Dendritic cell treated with granulocyte-macrophage colony-stimulating factor and Interleukin-4, amounts not matched to agents 40 ng/mL and 50 ng/mL, for 4 days (primary cell): ENCODE measurements at regions of chr1 and their contacts with region 1.

Region 1: GRCh38 chr1:52365746-52366516 is at the start of gene CC2D1B:
- H3K4me3 Mint-ChIP-seq: peak within 1 kb of the TSS; percentile 96
- H3K27ac Mint-ChIP-seq: peak within 1 kb of the TSS; percentile 99
- H3K4me1 Mint-ChIP-seq: peaks cover 31% of the 10 kb centered on the region
- H3K27me3 Mint-ChIP-seq: peaks cover 19% of the 10 kb centered on the region

Region 2: DNA sequence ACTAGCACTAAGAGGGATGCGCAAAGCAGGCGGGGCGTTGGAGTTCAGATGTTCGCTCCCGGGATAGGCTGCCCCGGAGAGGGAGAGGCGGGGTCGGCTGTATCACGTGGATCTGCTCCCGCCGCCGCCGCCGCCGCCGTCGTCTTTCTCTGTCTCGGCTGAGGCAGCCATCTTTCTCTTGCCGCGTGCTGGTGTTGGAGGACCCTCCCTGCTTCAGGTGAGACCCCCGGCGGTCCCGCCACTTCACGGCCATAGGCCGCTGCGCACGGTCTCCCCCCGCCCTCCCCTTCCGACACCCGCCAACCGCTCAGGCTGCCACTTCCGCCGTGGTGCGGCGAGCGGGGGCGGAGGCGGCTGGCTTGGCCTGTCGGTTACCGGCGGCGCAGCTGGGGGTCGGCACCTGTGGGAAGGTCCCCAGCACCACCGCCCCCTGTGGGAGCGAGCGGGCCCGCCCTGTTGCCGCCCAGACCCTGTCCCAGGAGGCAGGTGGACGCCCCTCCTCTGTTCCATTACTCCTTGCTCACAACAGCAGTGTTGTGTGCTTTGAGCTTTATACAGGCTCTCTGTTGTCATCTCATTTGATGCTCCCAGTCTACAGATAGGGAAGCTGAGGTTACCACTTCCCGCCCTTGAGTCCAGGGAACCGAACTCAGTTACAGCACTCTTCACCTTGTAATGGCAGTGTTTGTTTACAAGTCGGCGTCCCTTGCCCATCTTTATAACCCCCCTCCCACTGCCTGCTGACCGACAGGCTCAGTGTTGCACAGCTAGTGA is 309.6 kb before region 1 on chr1 and contains the start of gene BTF3L4:
- intact Hi-C with region 1: loop called (anchors 10 kb)
- H3K4me3 Mint-ChIP-seq: peak within 1 kb of the TSS; percentile 99
- H3K27ac Mint-ChIP-seq: peak within 1 kb of the TSS; percentile 90
- H3K4me1 Mint-ChIP-seq: peaks cover 53% of the 10 kb centered on the region
- H3K27me3 Mint-ChIP-seq: no peaks in the 10 kb centered on the region

Region 3: DNA sequence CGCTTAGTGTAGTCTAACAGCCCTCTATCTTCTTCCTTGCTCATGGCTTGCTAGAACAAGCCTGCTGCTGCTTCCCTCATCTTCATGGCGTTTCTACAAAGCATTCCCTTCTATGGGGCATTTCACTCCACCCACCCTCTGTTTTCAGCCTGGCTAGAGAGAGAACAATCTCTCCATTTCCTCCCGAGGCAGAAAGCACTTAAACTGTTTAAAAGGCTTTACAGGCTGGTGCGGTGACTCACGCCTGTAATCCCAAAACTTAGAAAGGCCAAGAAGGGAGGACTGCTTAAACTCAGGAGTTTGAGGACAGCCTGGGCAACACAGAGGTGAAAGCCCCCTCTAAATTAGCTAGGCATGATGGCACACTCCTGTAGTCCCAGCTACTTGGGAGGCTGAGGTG is 20.5 kb after region 1 on chr1:
- intact Hi-C with region 1: no loop called
- H3K4me3 Mint-ChIP-seq: no peak overlapping the region
- H3K27ac Mint-ChIP-seq: no peak overlapping the region
- H3K4me1 Mint-ChIP-seq: no peaks in the 10 kb centered on the region
- H3K27me3 Mint-ChIP-seq: no peaks in the 10 kb centered on the region

Region 4: DNA sequence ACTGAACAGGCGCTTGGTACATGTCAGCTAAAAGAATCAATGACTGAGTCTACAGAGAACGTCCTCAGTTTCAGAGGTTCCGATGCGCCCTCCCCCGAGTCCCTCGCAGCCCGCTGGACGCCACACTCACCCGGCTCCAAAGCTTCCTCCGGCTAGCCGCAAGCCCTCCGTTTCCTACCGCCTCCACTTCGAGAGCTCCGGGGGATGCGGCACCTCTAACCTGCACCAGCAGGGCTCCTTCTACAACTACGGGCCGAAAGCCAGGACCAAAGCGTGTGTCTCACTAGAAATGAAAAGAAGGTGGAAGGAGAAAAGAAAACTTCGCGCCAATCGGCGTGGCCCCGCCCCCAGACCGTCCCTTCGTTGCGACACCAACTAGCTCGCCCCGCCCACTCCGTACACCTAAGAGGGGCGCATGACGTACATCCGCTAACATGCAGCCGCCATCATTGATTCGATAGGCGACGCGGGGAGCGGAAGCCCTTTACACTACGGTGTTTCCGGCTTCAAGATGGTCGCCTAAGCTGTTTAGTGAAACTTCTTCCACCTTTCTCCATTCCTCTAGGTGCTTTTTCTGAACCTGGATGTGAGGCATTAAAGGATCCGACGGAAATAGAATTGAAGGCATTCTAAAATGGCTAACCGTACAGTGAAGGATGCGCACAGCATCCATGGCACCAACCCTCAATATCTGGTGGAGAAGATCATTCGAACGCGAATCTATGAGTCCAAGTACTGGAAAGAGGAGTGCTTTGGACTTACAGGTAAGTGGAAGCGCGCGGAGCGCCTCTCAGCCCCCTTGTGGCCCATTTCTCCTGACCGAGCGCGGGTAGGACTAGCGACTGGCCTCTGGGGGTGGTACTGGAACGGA is 38.4 kb after region 1 on chr1 and contains the starts of genes ORC1 and PRPF38A:
- intact Hi-C with region 1: loop called (anchors 1 kb)
- H3K4me3 Mint-ChIP-seq: peak within 1 kb of the TSS; percentile 99
- H3K27ac Mint-ChIP-seq: peak within 1 kb of the TSS; percentile 88
- H3K4me1 Mint-ChIP-seq: peaks cover 33% of the 10 kb centered on the region
- H3K27me3 Mint-ChIP-seq: no peaks in the 10 kb centered on the region

Region 5: GRCh38 chr1:52432807-52433206 is 66.9 kb after region 1 on chr1:
- intact Hi-C with region 1: no loop called
- H3K4me3 Mint-ChIP-seq: no peak overlapping the region
- H3K27ac Mint-ChIP-seq: no peak overlapping the region
- H3K4me1 Mint-ChIP-seq: no peaks in the 10 kb centered on the region
- H3K27me3 Mint-ChIP-seq: no peaks in the 10 kb centered on the region

Region 6: GRCh38 chr1:52444463-52444862 is 78.5 kb after region 1 on chr1:
- intact Hi-C with region 1: no loop called
- H3K4me3 Mint-ChIP-seq: no peak overlapping the region
- H3K27ac Mint-ChIP-seq: no peak overlapping the region
- H3K4me1 Mint-ChIP-seq: peaks cover 5% of the 10 kb centered on the region
- H3K27me3 Mint-ChIP-seq: no peaks in the 10 kb centered on the region

Region 7: GRCh38 chr1:52552505-52553361 is 186.8 kb after region 1 on chr1 and contains the start of gene TUT4:
- intact Hi-C with region 1: loop called (anchors 5 kb)
- H3K4me3 Mint-ChIP-seq: no peak within 1 kb of the TSS
- H3K27ac Mint-ChIP-seq: no peak within 1 kb of the TSS
- H3K4me1 Mint-ChIP-seq: peaks cover 5% of the 10 kb centered on the region
- H3K27me3 Mint-ChIP-seq: peaks cover 12% of the 10 kb centered on the region

Region 8: GRCh38 chr1:52683367-52683940 is 317.5 kb after region 1 on chr1:
- intact Hi-C with region 1: loop called (anchors 10 kb)
- H3K4me3 Mint-ChIP-seq: no peak overlapping the region
- H3K27ac Mint-ChIP-seq: no peak overlapping the region
- H3K4me1 Mint-ChIP-seq: no peaks in the 10 kb centered on the region
- H3K27me3 Mint-ChIP-seq: no peaks in the 10 kb centered on the region